ENCODE measurements at regions of chr20 and their contacts with region 1.

Region 1: GRCh38 chr20:45415774-45416637 is at the start of gene PIGT:
- DNase-seq: peak; percentile 88

Region 2: GRCh38 chr20:45373353-45374100 is 42.5 kb before region 1 on chr20:
- CTCF ChIA-PET with region 1: interaction called, 3 read pairs
- POLR2A ChIA-PET with region 1: interaction called, 12 read pairs
- DNase-seq: peak; percentile 83

Region 3: DNA sequence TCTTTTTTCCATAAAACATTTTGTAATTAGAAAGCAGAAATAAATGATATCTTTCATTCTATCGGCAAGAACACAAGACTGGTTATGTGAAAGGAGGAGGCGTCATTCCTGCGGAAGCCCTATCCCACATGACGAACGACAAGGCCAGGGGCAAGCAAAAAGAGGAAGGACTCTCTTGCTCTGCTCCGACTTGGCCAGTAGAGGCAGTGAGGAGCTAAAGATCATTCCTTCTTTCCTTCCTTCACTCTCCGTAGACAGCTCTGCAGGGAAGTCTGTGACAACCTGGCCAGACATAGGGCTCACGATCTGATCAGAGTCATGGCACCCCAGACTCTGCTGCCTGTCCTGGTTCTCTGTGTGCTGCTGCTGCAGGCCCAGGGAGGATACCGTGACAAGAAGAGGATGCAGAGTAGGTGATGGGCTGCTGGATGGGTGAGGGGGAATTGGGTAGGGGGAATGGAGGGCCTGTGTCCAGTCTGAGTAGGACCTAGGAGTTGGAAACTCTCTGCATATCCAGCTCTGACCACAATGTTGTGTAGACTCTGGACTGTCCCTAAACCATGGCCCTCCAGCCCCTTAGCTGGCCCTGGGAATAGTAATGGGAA is 213.6 kb after region 1 on chr20 and contains the start of gene WFDC10A:
- CTCF ChIA-PET with region 1: no interaction called
- POLR2A ChIA-PET with region 1: no interaction called
- DNase-seq: peak; percentile 77